Heart left ventricle (tissue), 16 donors: ENCODE measurements at regions of chr2 and their contacts with region 1.

Region 1: DNA sequence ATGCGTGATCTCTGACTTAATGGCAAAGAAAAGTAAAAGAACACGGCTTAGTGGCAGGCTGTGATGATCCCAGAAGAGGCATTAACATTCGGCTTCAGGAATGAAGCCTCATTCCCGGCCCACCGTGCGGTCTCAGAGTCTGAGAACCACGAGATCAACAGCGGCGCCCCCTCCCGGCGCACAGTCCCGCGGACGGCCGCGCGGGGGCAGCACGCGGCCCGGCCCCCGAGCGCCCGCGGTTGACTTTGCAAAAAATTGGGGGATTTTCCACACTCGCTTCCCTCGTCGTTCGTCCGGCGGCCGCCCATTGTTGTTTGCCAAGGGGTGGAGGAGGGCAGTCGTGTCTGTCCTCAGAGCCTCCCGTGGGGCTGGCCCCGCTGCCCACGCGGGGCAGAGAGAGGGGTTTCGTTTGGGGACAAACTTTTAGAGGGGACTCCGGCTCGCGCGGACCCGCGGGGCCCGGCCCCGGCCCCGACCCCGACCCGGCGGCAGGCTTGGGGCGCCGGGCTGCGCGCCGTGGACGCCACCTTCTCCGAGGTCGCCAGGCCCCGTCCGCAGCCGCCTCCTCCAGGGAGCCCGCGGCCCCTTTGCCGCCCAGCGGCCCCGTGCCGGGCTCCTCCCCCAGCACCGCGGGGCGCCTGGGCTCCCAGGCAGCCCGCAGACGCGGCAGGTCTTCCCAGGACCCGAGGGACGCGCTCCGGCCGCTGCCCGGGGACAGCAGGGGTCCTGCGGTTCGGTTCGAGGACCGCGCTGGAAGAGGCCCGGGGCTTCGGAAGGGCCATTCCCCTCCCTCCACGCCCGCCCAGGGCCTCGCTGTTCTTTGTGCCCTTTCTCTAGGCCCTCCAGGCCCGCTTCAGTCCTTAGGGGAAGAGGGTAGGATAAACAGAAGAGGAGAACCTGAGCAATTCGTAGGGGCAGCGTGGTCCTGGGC is 3.4 kb upstream of the HS6ST1 start:
- DNase-seq: peak; percentile 84 to 94 (median 88)
- ATAC-seq: peak; percentile 8 to 72 (median 70)
- H3K4me3 ChIP-seq: peak overlapping the region; percentile 31 to 76 (median 57)
- H3K27ac ChIP-seq: peak overlapping the region; percentile 18 to 79 (median 72)
- H3K4me1 ChIP-seq: peaks cover 2 to 42% (median 18%) of the 10 kb centered on the region in 12 donors
- H3K27me3 ChIP-seq: no peaks in the 10 kb centered on the region
- CTCF ChIP-seq: peak; percentile 92 to 100 (median 99)
- POLR2A ChIP-seq: peak in 1 of 2 donors; percentile 64

Region 2: GRCh38 chr2:127874378-127875271 is 447.4 kb before region 1 on chr2:
- intact Hi-C with region 1: no loop called
- DNase-seq: no peak
- ATAC-seq: peak in 3 of 4 donors; percentile 16 to 35 (median 29)
- H3K4me3 ChIP-seq: no peak overlapping the region
- H3K27ac ChIP-seq: peak overlapping the region in 1 of 12 donors; percentile 40
- H3K4me1 ChIP-seq: peaks cover 0 to 31% (median 17%) of the 10 kb centered on the region in 12 donors
- H3K27me3 ChIP-seq: no peaks in the 10 kb centered on the region
- CTCF ChIP-seq: no peak
- POLR2A ChIP-seq: no peak

Region 3: DNA sequence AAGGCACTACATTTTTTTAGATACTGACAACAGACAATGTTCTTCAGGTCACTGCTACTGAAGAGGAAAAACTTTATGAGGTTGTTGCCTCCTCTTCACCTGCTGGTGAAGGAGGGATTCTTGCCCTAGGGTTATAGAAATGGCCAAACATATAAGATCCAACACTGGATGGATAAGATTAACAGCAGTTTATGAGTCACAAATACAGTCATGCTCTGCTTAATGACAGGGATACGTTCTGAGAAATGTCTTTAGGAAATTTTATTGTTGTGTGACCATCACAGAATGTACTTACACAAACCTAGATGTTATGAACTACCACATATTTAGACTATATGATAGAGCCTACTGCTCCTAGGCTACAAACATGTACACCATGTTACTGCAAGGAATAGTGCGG is 378.9 kb before region 1 on chr2:
- intact Hi-C with region 1: no loop called
- DNase-seq: no peak
- ATAC-seq: no peak
- H3K4me3 ChIP-seq: no peak overlapping the region
- H3K27ac ChIP-seq: no peak overlapping the region
- H3K4me1 ChIP-seq: no peaks in the 10 kb centered on the region
- H3K27me3 ChIP-seq: no peaks in the 10 kb centered on the region
- CTCF ChIP-seq: no peak
- POLR2A ChIP-seq: no peak

Region 4: DNA sequence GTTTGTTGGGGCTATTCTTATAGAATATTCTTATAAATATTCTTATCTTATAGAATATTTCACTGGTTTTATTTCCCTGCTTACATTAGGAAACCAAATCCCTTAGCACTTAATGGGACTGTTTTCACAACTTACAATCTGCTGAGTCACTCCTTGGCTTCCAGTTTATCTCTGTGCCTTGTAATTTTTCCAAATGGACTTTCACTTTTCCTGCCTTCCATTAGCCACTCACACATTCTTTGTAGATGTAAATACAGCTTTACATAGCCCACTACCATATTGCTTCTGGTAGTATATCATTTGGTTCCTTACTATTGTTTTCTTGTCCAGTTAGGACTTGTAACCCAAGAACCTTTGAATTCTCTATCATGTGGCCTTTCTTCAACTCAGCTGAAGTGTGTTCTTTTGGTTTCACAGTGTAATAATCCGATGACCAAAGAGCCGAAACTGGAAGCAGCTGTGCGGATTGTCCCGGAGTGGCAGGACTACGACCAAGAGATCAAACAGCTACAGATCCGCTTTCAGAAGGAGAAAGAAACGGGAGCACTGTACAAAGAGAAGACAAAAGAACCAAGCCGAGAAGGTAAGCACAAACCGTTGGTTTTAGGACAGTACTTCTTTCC is 134.9 kb before region 1 on chr2:
- intact Hi-C with region 1: loop called in 3 of 10 experiments (anchors 10 kb)
- DNase-seq: no peak
- ATAC-seq: peak in 3 of 4 donors; percentile 27 to 58 (median 56)
- H3K4me3 ChIP-seq: peak overlapping the region in 7 of 12 donors; percentile 0 to 39 (median 6)
- H3K27ac ChIP-seq: peak overlapping the region in 10 of 12 donors; percentile 15 to 82 (median 44)
- H3K4me1 ChIP-seq: peaks cover 0 to 18% (median 5%) of the 10 kb centered on the region in 12 donors
- H3K27me3 ChIP-seq: no peaks in the 10 kb centered on the region
- CTCF ChIP-seq: no peak
- POLR2A ChIP-seq: no peak

Region 5: DNA sequence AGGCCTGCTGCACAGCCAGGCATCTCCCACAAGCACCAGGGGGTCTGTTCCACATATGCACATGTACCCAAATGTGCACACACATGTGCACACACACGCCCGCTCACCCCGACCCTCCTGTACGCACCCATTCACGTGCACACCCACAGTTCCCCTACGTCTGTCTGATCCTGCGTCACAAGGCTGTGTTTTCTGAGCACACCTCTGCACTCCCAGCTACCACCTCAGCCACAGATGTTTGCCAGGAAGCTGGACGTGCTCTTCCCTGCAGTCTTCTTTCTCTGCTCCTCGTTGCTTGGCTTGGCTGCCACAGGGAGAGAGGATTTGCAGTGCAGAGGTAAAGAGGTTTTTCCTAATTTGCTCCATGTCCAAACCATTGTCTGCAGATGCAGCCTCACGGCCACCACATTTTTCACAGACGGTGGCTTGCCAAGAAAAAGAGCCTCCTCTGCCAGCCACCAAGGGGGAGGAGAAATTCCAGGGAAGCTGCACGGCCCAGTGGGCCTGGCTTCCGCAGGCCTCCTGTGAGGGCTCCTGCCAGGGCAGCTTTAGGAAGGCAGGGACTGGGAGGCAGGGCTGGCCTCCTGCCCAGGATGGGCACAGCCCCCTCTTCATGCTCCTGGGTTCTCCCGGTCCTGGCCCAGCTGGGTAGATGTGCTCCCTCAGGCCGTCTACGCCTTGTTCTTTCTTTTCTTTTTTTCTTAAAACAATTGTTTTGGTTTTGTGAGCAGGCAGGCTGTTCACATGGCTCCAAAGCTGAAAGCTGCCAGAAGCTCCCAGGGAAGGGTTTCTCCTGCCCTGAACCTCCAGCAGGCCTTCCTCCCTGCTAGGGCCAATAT is 25.9 kb after region 1 on chr2:
- intact Hi-C with region 1: loop called in 1 of 10 experiments (anchors 2 kb)
- DNase-seq: peak; percentile 73 to 88 (median 81)
- ATAC-seq: peak; percentile 95 to 97 (median 96)
- H3K4me3 ChIP-seq: no peak overlapping the region
- H3K27ac ChIP-seq: peak overlapping the region; percentile 8 to 78 (median 60)
- H3K4me1 ChIP-seq: peaks cover 0 to 24% (median 16%) of the 10 kb centered on the region in 12 donors
- H3K27me3 ChIP-seq: no peaks in the 10 kb centered on the region
- CTCF ChIP-seq: no peak
- POLR2A ChIP-seq: no peak

Region 6: DNA sequence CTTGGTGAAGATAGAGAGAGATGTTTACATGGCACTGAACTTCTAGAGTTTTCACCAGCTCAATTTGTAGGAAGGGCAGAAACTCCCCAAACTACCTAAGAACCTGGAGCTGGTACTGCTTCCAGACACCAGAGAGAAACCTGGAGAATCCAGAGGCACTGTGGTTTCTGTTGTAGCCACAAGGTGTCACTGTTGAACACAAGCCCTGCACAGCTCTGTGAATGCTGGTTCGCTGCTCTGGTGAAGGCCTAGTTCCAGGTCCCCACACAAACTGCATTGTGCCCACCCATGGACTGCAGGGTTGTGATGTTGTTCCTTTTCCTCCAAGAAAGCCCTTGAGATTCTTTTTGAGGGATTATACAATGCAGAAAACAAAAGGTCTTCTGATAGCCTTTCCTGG is 147.2 kb after region 1 on chr2:
- intact Hi-C with region 1: loop called in 3 of 10 experiments (anchors 2 to 10 kb)
- DNase-seq: no peak
- ATAC-seq: no peak
- H3K4me3 ChIP-seq: no peak overlapping the region
- H3K27ac ChIP-seq: no peak overlapping the region
- H3K4me1 ChIP-seq: peaks cover 0 to 38% (median 15%) of the 10 kb centered on the region in 12 donors
- H3K27me3 ChIP-seq: peaks cover 0 to 7% (median 0%) of the 10 kb centered on the region in 9 donors
- CTCF ChIP-seq: peak in 5 of 12 donors; percentile 11 to 21 (median 13)
- POLR2A ChIP-seq: no peak

Region 7: DNA sequence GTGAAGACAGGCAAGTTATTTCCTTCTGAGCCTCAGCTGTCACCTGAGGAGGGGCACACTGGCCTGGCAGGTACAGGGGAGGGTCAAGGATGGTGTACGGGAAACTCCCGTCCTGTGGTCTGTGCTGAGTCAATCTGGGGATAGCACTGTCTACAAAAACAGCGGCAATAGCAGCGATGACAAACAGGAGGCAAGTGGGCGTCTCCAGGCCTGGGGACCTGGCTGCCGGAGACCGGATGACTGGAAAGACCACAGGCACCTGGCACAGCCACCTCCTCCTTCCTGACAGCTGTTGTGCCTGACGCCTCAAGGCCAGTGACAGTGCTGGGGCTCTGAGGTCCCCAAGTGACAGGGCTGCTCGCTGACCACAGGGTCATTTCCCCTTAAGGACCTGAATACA is 198.7 kb after region 1 on chr2:
- intact Hi-C with region 1: loop called in 1 of 10 experiments (anchors 10 kb)
- DNase-seq: no peak
- ATAC-seq: no peak
- H3K4me3 ChIP-seq: no peak overlapping the region
- H3K27ac ChIP-seq: no peak overlapping the region
- H3K4me1 ChIP-seq: peaks cover 0 to 11% (median 0%) of the 10 kb centered on the region in 12 donors
- H3K27me3 ChIP-seq: no peaks in the 10 kb centered on the region
- CTCF ChIP-seq: no peak
- POLR2A ChIP-seq: no peak

Region 8: GRCh38 chr2:128578406-128579390 is 256.6 kb after region 1 on chr2:
- intact Hi-C with region 1: loop called in 1 of 10 experiments (anchors 10 kb)
- DNase-seq: no peak
- ATAC-seq: no peak
- H3K4me3 ChIP-seq: no peak overlapping the region
- H3K27ac ChIP-seq: no peak overlapping the region
- H3K4me1 ChIP-seq: no peaks in the 10 kb centered on the region
- H3K27me3 ChIP-seq: no peaks in the 10 kb centered on the region
- CTCF ChIP-seq: no peak
- POLR2A ChIP-seq: no peak

Region 9: DNA sequence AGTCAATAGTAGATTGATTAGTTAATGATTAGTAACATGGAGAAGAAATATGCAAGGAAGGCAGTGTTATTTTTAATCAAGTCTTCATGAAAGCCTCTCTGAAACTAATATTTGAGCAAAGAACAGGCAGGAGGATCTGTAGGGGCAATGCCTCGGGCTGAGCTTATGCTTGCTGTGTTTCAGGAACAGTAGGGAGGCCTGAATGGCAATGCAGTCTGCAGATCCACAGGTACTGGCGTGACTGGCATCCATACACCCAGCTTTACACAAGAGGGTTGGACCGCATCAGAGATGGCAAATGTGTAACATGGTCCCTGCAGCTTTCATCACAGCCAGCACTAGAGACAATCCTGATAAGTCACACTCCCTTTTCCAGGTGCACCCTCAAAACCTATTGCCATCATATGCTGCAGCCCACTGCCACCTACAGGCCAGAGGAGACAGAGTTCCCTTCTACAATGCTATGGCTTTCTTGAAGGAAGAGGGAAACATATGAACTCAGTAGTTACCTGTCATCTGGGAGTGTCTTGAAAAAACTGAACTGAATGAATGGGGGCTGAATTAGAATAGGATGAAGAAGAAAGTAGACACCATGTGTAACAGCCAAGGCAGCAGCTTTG is 1075.0 kb after region 1 on chr2:
- intact Hi-C with region 1: loop called in 1 of 10 experiments (anchors 10 kb)
- DNase-seq: peak in 2 of 5 donors; percentile 31 to 40
- ATAC-seq: peak in 3 of 4 donors; percentile 52 to 70 (median 59)
- H3K4me3 ChIP-seq: no peak overlapping the region
- H3K27ac ChIP-seq: no peak overlapping the region
- H3K4me1 ChIP-seq: peaks cover 0 to 3% (median 0%) of the 10 kb centered on the region in 12 donors
- H3K27me3 ChIP-seq: no peaks in the 10 kb centered on the region
- CTCF ChIP-seq: peak; percentile 39 to 65 (median 54)
- POLR2A ChIP-seq: no peak